GM12878 (cell line): ENCODE measurements at regions of chr22 and their contacts with region 1.

Region 1: GRCh38 chr22:20495861-20496681 is 476 bp upstream of the KLHL22 start:
- DNase-seq: peak; percentile 44
- ATAC-seq: peak; percentile 98
- H3K4me3 ChIP-seq: peak overlapping the region; percentile 60
- H3K27ac ChIP-seq: peak overlapping the region; percentile 34
- H3K4me1 ChIP-seq: peaks cover 10% of the 10 kb centered on the region; the same call in 1 of the 2 replicates
- H3K27me3 ChIP-seq: no peaks in the 10 kb centered on the region
- CTCF ChIP-seq: peak; percentile 88 to 90 (median 90)
- EP300 ChIP-seq: no peak
- POLR2A ChIP-seq: peak; percentile 68
- RAD21 ChIP-seq: peak; percentile 63

Region 2: GRCh38 chr22:20456064-20456721 is 39.9 kb before region 1 on chr22:
- CTCF ChIA-PET with region 1: interaction called, 9 read pairs
- POLR2A ChIA-PET with region 1: interaction called, 3 read pairs
- RAD21 ChIA-PET with region 1: interaction called, 3 read pairs
- SMC1A ChIA-PET with region 1: no interaction called
- in situ Hi-C with region 1: no loop called
- intact Hi-C with region 1: loop called (anchors 1 kb)
- DNase-seq: peak; percentile 44
- ATAC-seq: peak; percentile 99
- H3K4me3 ChIP-seq: no peak overlapping the region
- H3K27ac ChIP-seq: no peak overlapping the region
- H3K4me1 ChIP-seq: peaks cover 9% of the 10 kb centered on the region
- H3K27me3 ChIP-seq: no peaks in the 10 kb centered on the region
- CTCF ChIP-seq: peak; percentile 92 to 95 (median 95)
- EP300 ChIP-seq: no peak
- POLR2A ChIP-seq: no peak
- RAD21 ChIP-seq: peak; percentile 78